ENCODE measurements at regions of chr7 and their contacts with region 1.

Region 1: DNA sequence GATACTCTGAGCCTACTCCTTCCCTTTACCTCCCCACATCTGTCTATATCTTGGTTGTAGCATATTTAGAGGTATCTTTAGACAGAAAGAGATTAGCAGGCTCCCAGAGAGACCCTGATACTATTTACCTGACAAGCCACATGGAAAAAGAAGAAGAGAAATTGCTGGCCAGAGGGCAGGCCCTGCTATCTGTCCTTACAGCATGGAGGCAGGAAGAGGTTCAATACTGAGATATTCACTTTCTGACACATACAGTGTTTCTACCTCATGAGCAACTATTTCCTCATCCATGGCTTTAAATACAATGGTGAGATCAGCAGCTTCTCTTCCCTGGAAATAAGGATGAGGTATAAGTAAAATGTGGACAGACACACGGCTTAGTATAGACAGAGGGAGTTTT is 33.9 kb upstream of the TSPAN13 start:
- DNase-seq: no peak
- H3K4me3 ChIP-seq: no peak overlapping the region
- H3K4me3 Mint-ChIP-seq: peak overlapping the region; percentile 46
- H3K27ac Mint-ChIP-seq: peak overlapping the region; percentile 93
- H3K4me1 ChIP-seq: peaks cover 30% of the 10 kb centered on the region
- H3K4me1 Mint-ChIP-seq: peaks cover 32% of the 10 kb centered on the region
- H3K27me3 ChIP-seq: no peaks in the 10 kb centered on the region
- H3K27me3 Mint-ChIP-seq: no peaks in the 10 kb centered on the region
- CTCF ChIP-seq: no peak

Region 2: GRCh38 chr7:16739863-16740622 is 20.3 kb after region 1 on chr7:
- CTCF ChIA-PET with region 1: no interaction called
- POLR2A ChIA-PET with region 1: no interaction called
- intact Hi-C with region 1: loop called (anchors 2 kb)
- DNase-seq: peak; percentile 48 to 74
- H3K4me3 ChIP-seq: no peak overlapping the region
- H3K4me3 Mint-ChIP-seq: peak overlapping the region; percentile 34
- H3K27ac Mint-ChIP-seq: peak overlapping the region; percentile 80
- H3K4me1 ChIP-seq: peaks cover 71% of the 10 kb centered on the region
- H3K4me1 Mint-ChIP-seq: peaks cover 40% of the 10 kb centered on the region
- H3K27me3 ChIP-seq: no peaks in the 10 kb centered on the region
- H3K27me3 Mint-ChIP-seq: no peaks in the 10 kb centered on the region
- CTCF ChIP-seq: no peak

Region 3: GRCh38 chr7:16753102-16753931 is 33.6 kb after region 1 on chr7 and contains the start of gene TSPAN13:
- CTCF ChIA-PET with region 1: no interaction called
- POLR2A ChIA-PET with region 1: no interaction called
- intact Hi-C with region 1: loop called (anchors 1 kb)
- DNase-seq: peak; percentile 98 to 99
- H3K4me3 ChIP-seq: peak within 1 kb of the TSS; percentile 91
- H3K4me3 Mint-ChIP-seq: peak within 1 kb of the TSS; percentile 92
- H3K27ac Mint-ChIP-seq: peak within 1 kb of the TSS; percentile 91
- H3K4me1 ChIP-seq: peaks cover 20% of the 10 kb centered on the region
- H3K4me1 Mint-ChIP-seq: peaks cover 20% of the 10 kb centered on the region
- H3K27me3 ChIP-seq: no peaks in the 10 kb centered on the region
- H3K27me3 Mint-ChIP-seq: no peaks in the 10 kb centered on the region
- CTCF ChIP-seq: no peak
- total RNA-seq, gene TSPAN13: 193 and 208 TPM in 2 replicates

Region 4: DNA sequence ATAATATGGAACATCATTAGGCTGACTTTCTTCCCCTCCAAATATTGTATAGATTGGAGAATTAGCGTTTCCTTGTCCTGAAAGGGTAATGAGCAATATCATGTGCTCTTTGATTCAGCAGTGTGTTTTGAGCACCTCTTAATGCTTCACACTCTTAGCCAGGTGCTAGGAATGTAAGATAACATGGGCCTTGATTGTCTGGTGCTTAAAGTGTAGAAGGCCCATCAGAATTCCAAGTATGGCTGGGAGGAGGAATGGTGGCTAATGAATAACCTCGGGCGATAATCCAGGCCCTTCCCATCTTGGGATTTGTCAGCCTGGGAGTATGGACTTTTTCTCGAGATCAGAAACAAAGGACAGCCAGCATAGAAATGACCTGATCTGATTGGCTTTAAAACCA is 42.5 kb after region 1 on chr7:
- CTCF ChIA-PET with region 1: no interaction called
- POLR2A ChIA-PET with region 1: no interaction called
- intact Hi-C with region 1: loop called (anchors 1 kb)
- DNase-seq: peak; percentile 83 to 89
- H3K4me3 ChIP-seq: no peak overlapping the region
- H3K4me3 Mint-ChIP-seq: peak overlapping the region; percentile 57
- H3K27ac Mint-ChIP-seq: peak overlapping the region; percentile 52
- H3K4me1 ChIP-seq: peaks cover 63% of the 10 kb centered on the region
- H3K4me1 Mint-ChIP-seq: peaks cover 56% of the 10 kb centered on the region
- H3K27me3 ChIP-seq: no peaks in the 10 kb centered on the region
- H3K27me3 Mint-ChIP-seq: no peaks in the 10 kb centered on the region
- CTCF ChIP-seq: no peak

Measured in Caco-2 (cell line).